AG04449 (cell line): ENCODE measurements at regions of chr5 and their contacts with region 1.

Region 1: GRCh38 chr5:72523960-72524582 is 16.9 kb upstream of the ZNF366 start:
- DNase-seq: peak; percentile 73
- H3K4me3 ChIP-seq: no peak overlapping the region
- CTCF ChIP-seq: peak; percentile 46

Region 2: DNA sequence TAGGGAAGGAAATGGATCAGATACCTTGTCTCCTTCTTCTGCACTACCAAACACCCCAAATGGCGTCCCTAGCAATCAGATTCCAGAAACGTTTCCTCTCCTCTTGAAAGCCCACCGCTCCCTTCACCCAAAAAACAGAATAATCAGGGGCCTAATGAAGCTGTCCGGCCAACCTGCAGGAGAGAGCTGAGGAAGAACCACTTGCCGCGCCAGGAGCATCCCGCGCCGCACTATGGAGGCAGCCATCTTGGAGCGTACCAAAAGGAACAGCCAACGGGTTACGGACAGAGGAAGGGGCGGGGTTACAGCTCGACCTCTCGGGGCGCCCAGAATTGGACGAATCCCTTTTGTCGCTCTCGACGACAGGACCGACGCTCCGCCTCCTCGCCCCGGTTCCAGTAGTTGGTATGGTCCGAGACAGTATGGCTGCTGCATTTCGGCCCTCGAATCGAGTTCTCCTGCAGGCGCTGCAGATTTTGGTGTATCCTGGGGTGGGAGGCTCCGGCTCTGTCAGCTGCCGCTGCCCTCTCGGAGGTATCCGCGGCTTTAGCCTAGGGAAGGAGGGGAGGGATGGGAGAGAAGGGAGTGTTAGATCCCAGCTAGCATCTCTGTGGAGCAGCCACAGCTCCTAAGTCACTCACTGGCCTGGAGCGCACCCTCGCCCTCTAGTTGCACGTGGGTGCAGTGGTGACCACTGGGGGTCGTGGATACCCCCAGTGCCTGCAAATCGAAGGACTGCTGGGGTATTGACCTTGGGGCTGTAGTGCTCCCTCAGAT is 203.9 kb before region 1 on chr5 and contains the starts of genes MRPS27 and PTCD2:
- CTCF ChIA-PET with region 1: interaction called, 10 read pairs
- POLR2A ChIA-PET with region 1: no interaction called
- DNase-seq: peak; percentile 97
- H3K4me3 ChIP-seq: peak within 1 kb of the TSS; percentile 98
- CTCF ChIP-seq: peak; percentile 38

Region 3: DNA sequence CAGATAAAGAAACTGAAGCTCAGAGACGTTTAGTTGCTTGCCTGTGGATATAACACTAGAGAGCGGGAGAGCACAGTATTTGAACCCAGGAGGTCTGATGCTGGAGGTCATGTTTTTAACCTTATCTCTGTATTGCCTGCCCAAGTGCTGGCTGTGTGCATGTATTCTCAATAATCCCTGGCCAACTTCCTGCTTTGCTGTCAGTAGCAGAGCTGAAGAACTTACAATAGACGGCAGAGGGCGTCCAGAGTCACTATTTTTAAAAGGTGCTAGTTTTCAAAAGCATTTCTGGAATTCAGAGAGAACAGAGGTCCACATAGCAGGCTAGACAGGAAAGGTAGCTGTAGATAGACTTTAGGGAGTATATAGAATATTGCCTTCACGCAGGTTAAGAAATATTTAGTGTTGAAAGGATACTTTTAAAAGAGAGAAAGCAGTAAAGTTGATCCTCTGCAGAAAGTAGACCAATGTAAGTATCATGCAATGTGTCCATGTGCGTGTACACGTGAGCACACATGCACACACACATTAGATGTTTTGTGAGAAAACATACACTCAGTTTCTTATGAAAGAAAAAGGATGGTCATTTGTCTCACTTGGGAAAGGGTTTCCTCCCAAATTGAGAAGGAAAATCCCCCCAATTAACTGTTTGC is 157.6 kb before region 1 on chr5:
- CTCF ChIA-PET with region 1: interaction called, 121 read pairs
- POLR2A ChIA-PET with region 1: no interaction called
- DNase-seq: no peak
- H3K4me3 ChIP-seq: no peak overlapping the region
- CTCF ChIP-seq: peak; percentile 60

Region 4: GRCh38 chr5:72387985-72388384 is 136.1 kb before region 1 on chr5:
- CTCF ChIA-PET with region 1: interaction called, 10 read pairs
- POLR2A ChIA-PET with region 1: no interaction called
- DNase-seq: no peak
- H3K4me3 ChIP-seq: no peak overlapping the region
- CTCF ChIP-seq: no peak

Region 5: GRCh38 chr5:72511774-72512592 is 12.1 kb before region 1 on chr5:
- CTCF ChIA-PET with region 1: interaction called, 24 read pairs
- POLR2A ChIA-PET with region 1: no interaction called
- DNase-seq: no peak
- H3K4me3 ChIP-seq: no peak overlapping the region
- CTCF ChIP-seq: no peak